Activated T-helper 2 cell treated with anti-CD3 and anti-CD28 coated beads, Interferon-gamma antibody, Interleukin-2, Interleukin-4, amounts not matched to agents 10 μg/mL and 5 μg/mL and 100 μg/mL, durations not matched to agents 14 hours and 24 hours and 36 hours (primary cell): ENCODE measurements at regions of chr4 and their contacts with region 1.

Region 1: GRCh38 chr4:102344954-102345794 is at the start of gene SLC39A8:
- DNase-seq: peak; percentile 88
- H3K4me3 Mint-ChIP-seq: peak within 1 kb of the TSS; percentile 83
- H3K27ac Mint-ChIP-seq: peak within 1 kb of the TSS; percentile 96
- H3K4me1 Mint-ChIP-seq: peaks cover 38% of the 10 kb centered on the region
- H3K27me3 Mint-ChIP-seq: peaks cover 3% of the 10 kb centered on the region
- total RNA-seq, gene SLC39A8: 136 TPM in 2 replicates

Region 2: DNA sequence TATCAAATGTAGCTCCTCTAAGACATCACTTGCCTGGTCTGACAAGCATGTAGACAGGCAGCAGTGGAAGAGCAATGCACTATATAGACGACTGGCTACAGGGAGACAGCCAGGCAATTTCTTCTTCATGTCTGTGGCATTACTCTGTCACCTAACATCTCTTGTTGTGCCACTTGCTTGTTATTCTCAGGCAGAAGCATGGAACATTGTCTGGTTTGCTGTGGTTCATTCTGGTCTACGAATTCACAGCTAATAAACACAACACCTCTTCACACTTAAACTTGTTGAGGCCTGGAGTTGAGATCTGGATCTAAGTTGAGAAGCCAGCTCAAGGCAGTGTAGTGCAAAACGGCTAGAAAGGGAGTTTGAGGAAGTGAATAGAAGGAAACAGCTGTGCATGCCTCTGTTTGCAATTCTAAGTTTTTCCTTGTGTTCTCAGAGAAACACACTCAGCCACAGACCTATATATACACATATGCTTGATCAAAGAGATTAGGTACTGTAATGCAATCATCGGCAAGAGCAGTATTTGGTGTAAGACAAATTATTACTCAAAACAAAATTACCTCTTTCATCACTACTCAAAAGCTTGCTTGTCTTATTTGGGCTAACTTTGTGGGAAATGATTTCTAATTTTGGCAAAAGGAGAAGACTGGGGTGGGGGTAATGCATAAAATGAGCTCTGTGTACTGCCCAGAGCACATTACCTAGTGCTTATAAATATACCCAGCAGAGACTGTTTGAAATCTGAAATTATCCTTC is 1241.6 kb before region 1 on chr4:
- intact Hi-C with region 1: loop called (anchors 2 kb)
- DNase-seq: no peak
- H3K4me3 Mint-ChIP-seq: peak overlapping the region; percentile 11
- H3K27ac Mint-ChIP-seq: peak overlapping the region; percentile 52
- H3K4me1 Mint-ChIP-seq: peaks cover 25% of the 10 kb centered on the region
- H3K27me3 Mint-ChIP-seq: no peaks in the 10 kb centered on the region

Region 3: DNA sequence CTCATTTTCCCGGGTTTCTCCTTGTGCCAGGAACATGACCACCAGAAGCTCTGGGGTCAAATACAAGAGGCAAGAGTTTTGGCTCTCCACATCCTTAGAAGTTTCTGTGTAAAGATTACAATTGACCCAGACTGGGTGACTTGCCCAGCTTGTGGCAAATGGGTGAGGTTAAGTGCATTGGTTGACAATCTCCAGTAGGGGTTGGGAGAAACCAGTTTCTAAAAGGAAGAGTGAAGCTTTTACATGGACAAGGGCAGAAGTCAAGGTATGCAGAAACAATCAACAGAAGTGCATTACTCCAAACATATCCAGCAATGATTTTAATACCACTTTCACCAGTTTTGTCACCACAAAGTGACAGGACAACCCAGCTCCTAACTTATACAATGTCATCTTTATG is 89.7 kb before region 1 on chr4:
- intact Hi-C with region 1: loop called (anchors 1 kb)
- DNase-seq: no peak
- H3K4me3 Mint-ChIP-seq: no peak overlapping the region
- H3K27ac Mint-ChIP-seq: no peak overlapping the region
- H3K4me1 Mint-ChIP-seq: peaks cover 5% of the 10 kb centered on the region
- H3K27me3 Mint-ChIP-seq: no peaks in the 10 kb centered on the region

Region 4: GRCh38 chr4:102430461-102430910 is 85.3 kb after region 1 on chr4:
- intact Hi-C with region 1: loop called (anchors 1 kb)
- DNase-seq: no peak
- H3K4me3 Mint-ChIP-seq: peak overlapping the region; percentile 87
- H3K27ac Mint-ChIP-seq: peak overlapping the region; percentile 86
- H3K4me1 Mint-ChIP-seq: peaks cover 16% of the 10 kb centered on the region
- H3K27me3 Mint-ChIP-seq: peaks cover 6% of the 10 kb centered on the region

Region 5: DNA sequence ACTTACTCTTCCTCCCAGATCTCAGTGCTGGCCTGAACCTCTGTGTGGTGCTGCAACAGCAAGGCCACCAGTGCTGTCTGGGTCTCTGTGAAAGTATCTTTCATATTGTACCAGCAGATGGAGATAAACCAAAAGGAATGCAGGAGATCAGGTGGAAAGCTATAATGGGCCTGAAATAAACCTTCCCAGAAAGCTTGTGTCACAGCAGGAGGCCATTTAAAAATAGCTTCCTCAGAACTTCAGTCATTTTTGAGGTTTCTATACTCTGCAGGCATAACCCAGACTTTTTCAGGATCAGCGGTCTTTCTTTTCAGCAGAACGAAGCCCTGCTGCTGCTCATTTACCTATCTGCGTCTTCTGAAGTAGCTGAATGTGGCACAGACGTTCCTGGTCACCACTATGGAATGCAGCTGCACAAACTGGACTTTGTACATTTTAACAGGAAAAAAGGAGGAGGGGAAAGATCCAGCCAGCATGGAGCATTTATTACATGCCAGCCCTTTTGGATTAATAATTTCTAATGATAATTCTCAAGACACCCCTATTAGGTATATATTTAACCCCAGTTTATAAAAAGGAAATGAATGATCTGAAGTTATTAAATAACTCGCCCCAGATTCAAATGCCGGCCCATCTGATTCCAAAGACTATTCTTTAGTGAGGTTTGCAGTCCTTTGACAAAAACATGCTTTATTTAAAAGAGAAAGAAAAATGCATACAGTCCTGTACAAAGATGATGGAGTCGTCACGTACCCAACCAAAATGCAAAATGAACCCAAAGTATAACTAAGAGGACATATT is 275.7 kb after region 1 on chr4:
- intact Hi-C with region 1: loop called (anchors 2 kb)
- DNase-seq: no peak
- H3K4me3 Mint-ChIP-seq: no peak overlapping the region
- H3K27ac Mint-ChIP-seq: peak overlapping the region; percentile 58
- H3K4me1 Mint-ChIP-seq: peaks cover 49% of the 10 kb centered on the region
- H3K27me3 Mint-ChIP-seq: no peaks in the 10 kb centered on the region

Region 6: DNA sequence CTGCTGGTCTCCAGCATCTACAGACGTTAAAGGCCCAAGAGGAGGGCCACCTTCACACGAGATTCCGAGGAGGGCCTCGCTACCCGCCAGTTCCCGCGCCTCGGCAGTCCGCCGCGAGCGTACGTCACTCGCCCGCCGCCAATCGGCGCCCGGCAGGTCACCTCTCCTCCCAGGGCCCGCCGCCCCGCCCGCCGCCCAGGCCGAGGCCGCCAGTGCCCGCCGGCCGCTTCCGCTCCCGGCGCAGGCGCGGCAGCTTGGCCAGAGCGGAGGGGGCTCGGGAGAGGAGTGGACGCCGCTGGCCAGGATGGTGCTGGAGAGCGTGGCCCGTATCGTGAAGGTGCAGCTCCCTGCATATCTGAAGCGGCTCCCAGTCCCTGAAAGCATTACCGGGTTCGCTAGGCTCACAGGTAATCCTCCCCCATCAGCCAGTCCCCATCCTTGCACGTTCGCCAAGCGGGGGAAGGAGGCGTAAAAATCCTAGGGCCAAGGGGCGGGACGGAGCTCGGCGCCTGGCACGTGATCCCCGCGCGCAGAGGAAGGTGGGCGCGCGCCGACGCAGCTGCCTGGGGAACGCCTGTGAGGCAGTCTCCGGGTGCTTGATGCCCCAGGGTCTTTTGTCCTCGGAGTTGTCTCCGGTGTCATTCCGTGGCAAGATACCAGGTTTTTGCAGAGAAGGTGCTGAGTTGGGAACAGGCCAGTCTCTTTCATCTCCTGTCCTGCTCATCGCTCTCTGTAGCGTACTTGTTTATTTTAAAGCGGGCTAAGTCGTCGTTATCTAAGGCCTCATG is 523.8 kb after region 1 on chr4 and contains the start of gene CISD2:
- intact Hi-C with region 1: loop called (anchors 1 kb)
- DNase-seq: peak; percentile 93
- H3K4me3 Mint-ChIP-seq: peak within 1 kb of the TSS; percentile 90
- H3K27ac Mint-ChIP-seq: peak within 1 kb of the TSS; percentile 99
- H3K4me1 Mint-ChIP-seq: peaks cover 48% of the 10 kb centered on the region
- H3K27me3 Mint-ChIP-seq: no peaks in the 10 kb centered on the region
- total RNA-seq, gene CISD2: 50.8 and 51.4 TPM in 2 replicates

Region 7: DNA sequence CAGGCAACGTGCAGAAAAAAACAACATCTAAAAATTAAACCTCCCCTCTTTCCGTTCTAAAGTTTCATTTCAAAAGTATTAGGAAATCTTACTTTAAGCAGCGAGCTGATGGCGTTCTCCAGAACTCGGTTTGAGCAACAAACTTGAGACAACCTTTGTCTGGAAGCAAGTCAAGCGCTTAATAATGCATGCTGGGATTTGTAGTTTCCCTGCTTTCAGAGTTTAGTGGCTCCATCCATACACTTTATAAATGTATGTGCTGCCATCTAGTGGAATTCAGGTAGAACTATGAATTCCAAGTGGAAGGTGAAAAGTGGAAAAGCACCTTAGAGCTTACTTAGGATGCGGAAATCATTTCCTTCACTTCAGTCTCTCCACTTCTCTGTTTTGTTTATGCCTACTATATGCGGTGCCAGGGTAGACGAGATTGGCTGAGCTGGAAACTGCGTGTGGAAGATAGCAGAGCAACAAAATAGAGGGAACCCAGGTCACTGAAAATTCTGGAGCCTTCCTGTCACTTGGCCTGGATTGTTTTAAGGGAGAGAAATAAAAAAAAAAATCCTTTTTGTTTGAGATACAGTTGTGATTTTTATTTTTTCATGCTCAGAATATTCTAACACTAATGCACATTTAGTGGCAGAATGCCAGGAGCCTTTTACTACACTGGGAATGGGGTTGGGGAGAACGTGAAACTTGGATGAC is 754.7 kb after region 1 on chr4 and contains the start of gene BDH2:
- intact Hi-C with region 1: loop called (anchors 5 kb)
- DNase-seq: peak; percentile 31
- H3K4me3 Mint-ChIP-seq: peak within 1 kb of the TSS; percentile 85
- H3K27ac Mint-ChIP-seq: peak within 1 kb of the TSS; percentile 85
- H3K4me1 Mint-ChIP-seq: peaks cover 20% of the 10 kb centered on the region
- H3K27me3 Mint-ChIP-seq: no peaks in the 10 kb centered on the region
- total RNA-seq, gene BDH2: 16.0 and 16.3 TPM in 2 replicates